Activated CD4-positive, alpha-beta T cell treated with anti-CD3 and anti-CD28 coated beads, Interleukin-2, amount 10 ng/mL, durations not matched to agents 24 days and 14 days (primary cell): ENCODE measurements at regions of chr10 and their contacts with region 1.

Region 1: GRCh38 chr10:5844345-5845048 is 31.3 kb upstream of the GDI2 start:
- DNase-seq: no peak
- H3K4me3 Mint-ChIP-seq: peak overlapping the region; percentile 4
- H3K27ac Mint-ChIP-seq: peak overlapping the region; percentile 67
- H3K4me1 Mint-ChIP-seq: peaks cover 20% of the 10 kb centered on the region
- H3K27me3 Mint-ChIP-seq: no peaks in the 10 kb centered on the region

Region 2: DNA sequence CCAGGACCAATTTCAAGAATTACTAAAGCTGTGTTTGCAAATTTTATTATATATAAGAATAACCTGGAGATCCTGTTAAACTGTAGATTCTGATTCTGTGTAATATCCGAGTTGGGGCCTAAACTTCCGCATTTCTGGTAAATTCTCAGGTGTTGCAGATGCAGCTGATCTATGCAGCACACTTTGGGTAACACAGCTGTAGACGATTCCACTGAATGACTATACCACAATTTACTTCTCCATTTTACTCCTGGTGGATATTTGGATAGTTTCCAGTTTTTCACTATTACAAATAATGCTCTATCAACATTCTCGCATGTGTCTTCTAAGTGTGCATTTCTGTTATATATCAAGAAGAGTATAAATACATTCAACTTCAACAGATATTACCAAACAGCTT is 38.8 kb before region 1 on chr10:
- intact Hi-C with region 1: no loop called
- DNase-seq: no peak
- H3K4me3 Mint-ChIP-seq: no peak overlapping the region
- H3K27ac Mint-ChIP-seq: no peak overlapping the region
- H3K4me1 Mint-ChIP-seq: peaks cover 44% of the 10 kb centered on the region
- H3K27me3 Mint-ChIP-seq: no peaks in the 10 kb centered on the region

Region 3: GRCh38 chr10:5818894-5819293 is 25.6 kb before region 1 on chr10:
- intact Hi-C with region 1: loop called (anchors 1 kb)
- DNase-seq: no peak
- H3K4me3 Mint-ChIP-seq: no peak overlapping the region
- H3K27ac Mint-ChIP-seq: no peak overlapping the region
- H3K4me1 Mint-ChIP-seq: peaks cover 45% of the 10 kb centered on the region
- H3K27me3 Mint-ChIP-seq: no peaks in the 10 kb centered on the region